PC-9 (cell line): ENCODE measurements at regions of chr19 and their contacts with region 1.

Region 1: DNA sequence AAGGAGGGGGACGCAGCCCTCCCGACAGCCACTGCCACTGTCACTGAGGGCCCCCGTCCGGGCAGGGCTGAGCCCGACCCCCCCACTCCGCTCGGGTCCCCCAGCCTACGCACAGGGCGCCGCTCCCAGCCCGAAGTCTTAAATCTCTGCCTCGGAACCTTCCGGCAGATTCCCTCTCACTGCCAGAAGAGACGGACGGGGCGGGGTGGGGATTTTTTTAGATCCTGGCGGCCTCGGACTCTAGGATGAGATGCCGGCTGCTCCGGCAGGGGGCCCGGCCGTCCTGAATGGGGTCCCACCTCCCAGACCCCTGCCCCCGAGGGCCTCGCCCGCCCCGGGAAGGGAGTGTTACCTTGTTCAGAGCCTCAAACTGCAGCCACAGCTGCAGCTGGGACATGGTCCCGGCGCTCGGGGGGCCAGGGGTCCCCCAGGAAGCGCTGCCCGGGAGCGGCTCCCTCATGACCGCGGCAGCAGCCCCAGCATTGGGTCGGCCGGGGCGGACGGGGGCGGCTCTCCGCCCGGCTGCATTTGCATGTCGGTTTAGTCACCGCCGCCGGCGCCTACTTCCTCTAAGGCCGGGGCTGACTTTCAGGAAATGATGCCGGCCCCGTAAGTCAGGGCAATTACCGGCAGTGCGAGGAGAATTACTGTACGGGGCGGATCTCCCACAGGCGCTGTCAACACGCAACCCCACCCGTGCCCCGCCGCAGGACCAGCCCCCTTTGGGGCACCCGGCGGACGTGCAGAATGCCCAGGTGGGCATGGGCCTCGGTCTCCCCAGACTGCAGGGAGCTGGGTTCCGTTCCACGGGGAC is 28.2 kb downstream of the GPX4 start:
- DNase-seq: peak in 1 of 2 experiments; percentile 79
- H3K4me3 ChIP-seq: peak overlapping the region; percentile 56; the same call in 1 of the 2 replicates
- H3K27ac ChIP-seq: no peak overlapping the region
- H3K4me1 ChIP-seq: no peaks in the 10 kb centered on the region
- H3K27me3 ChIP-seq: no peaks in the 10 kb centered on the region
- CTCF ChIP-seq: no peak

Region 2: DNA sequence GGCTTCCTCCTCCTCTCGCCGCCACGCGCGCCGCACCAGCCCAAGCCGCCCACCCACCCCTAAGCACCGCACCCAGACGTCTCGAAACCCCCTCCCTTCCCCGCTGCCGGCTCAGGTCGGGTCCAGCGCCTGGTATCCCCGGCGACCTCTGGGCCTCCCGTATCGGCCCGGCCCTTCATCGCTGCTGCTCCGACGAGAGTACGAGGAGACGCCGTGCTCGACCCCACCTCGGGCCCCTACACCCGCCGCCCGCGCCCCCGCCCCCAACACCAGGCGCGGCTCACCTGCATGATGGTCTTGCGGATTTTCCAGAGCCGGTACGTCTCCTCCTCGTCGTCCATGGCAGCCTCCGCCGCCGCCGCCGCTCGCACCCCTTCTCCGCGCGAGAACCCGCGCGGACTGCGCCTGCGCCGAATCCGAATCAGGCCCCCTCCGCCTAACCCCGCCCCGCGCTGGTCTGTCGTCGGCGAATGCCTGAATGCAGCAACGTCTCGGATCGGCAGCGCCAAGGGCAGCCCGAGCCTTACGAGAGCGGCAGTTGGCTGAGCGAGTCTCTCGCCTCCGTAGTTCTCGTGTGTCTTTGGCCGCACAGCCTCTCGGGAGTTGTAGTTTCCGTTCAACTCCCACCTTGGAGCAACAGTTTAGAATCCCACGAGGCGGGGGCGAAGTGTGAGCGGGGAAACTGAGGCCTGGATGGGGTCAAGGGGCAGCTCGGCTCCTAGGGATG is 36.8 kb before region 1 on chr19 and contains the start of gene POLR2E:
- CTCF ChIA-PET with region 1: no interaction called
- POLR2A ChIA-PET with region 1: no interaction called
- intact Hi-C with region 1: loop called (anchors 5 kb)
- DNase-seq: peak; percentile 90 to 97
- H3K4me3 ChIP-seq: peak within 1 kb of the TSS; percentile 96
- H3K27ac ChIP-seq: no peak within 1 kb of the TSS
- H3K4me1 ChIP-seq: peaks cover 34% of the 10 kb centered on the region
- H3K27me3 ChIP-seq: no peaks in the 10 kb centered on the region
- CTCF ChIP-seq: no peak
- total RNA-seq, gene POLR2E: 180 and 237 TPM in 2 replicates

Region 3: GRCh38 chr19:1223018-1223855 is 91.3 kb after region 1 on chr19:
- CTCF ChIA-PET with region 1: no interaction called
- POLR2A ChIA-PET with region 1: no interaction called
- intact Hi-C with region 1: no loop called
- DNase-seq: no peak
- H3K4me3 ChIP-seq: no peak overlapping the region
- H3K27ac ChIP-seq: no peak overlapping the region
- H3K4me1 ChIP-seq: no peaks in the 10 kb centered on the region
- H3K27me3 ChIP-seq: no peaks in the 10 kb centered on the region
- CTCF ChIP-seq: peak; percentile 51; the same call in 1 of the 2 replicates